ENCODE measurements at regions of chr1 and their contacts with region 1.

Region 1: DNA sequence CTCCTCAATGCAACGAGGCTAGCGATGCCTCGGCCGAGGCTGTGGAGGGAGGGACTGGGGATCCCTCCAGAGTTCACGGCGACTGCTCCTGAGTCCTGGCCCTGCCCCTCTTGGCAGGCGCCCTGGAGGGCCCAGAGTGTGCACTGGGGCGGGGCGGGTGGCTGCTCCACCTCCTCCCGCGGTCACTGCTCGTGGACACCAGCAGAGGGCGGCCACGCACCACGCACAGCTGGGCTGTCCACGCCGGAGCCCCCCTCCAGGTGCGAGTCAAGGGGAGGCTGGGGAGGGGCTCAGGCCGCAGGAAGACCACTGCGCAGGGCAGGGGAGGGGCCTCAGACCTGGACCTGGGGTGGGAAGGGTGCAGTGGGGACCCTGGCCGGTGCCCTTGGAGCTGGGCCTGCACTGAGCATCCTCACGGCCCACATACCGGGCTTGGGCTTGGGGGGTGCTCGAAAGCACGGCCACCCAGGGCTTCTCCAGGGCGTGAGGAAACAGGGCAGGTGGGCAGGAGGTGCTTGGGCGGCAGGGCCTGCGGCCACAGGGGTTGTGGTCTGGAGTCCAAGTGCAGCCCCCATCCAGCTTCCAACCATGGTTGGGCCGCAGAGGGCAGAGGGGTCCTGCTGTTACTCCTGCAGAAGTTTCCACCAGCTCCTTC is 20.6 kb upstream of the TTC34 start:
- DNase-seq: peak; percentile 21 to 73 (median 45)
- ATAC-seq: peak; percentile 88
- H3K4me3 ChIP-seq: no peak overlapping the region
- H3K4me3 Mint-ChIP-seq: no peak overlapping the region
- H3K27ac ChIP-seq: no peak overlapping the region
- H3K27ac Mint-ChIP-seq: no peak overlapping the region
- H3K4me1 ChIP-seq: peaks cover 11% of the 10 kb centered on the region
- H3K4me1 Mint-ChIP-seq: no peaks in the 10 kb centered on the region
- H3K27me3 ChIP-seq: peaks cover 6 to 11% of the 10 kb centered on the region in 2 experiments
- H3K27me3 Mint-ChIP-seq: peaks cover 4% of the 10 kb centered on the region
- CTCF ChIP-seq: peak; percentile 76

Region 2: DNA sequence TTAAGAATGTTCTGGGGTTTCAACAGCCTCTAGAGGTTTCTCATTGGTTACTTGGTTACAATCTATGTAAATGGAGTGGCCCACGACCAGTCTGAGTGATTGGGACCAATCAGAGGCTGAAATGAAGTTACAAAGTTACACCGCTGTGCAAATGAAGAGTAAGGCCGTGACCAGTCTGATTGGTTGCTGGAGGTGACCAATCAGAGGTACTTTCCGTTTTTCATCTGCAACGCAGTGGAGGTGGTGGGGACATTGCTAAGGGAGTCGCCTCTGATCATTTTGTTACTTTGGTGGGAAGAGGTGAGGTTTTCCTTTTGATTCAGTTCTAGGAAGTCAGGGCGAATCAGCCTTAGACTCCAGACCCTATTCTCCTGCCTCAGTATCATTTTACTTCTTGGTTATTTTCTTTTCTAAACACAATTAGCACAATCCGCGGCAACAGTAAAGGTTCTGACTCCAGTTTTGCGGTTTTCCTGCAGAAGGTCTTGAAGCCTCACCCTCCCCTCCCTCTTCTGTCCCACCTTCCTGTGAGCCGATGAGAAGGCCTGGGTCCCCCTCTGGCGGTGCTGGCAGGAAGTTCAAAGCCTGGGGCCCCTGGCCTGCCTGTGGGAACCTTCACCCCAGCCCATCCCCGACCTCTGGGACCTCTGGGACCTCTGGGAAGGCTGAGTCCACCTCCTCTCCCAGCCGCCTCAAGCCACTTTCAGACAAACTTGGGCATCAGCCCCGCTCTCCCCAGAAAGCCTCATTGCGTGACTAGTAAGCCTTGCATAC is 18.1 kb after region 1 on chr1:
- CTCF ChIA-PET with region 1: no interaction called
- POLR2A ChIA-PET with region 1: no interaction called
- intact Hi-C with region 1: loop called (anchors 1 kb)
- DNase-seq: peak; percentile 52 to 86 (median 68)
- ATAC-seq: peak; percentile 89
- H3K4me3 ChIP-seq: peak overlapping the region; percentile 35
- H3K4me3 Mint-ChIP-seq: peak overlapping the region; percentile 83
- H3K27ac ChIP-seq: peak overlapping the region; percentile 11 to 55
- H3K27ac Mint-ChIP-seq: peak overlapping the region; percentile 85
- H3K4me1 ChIP-seq: peaks cover 17% of the 10 kb centered on the region
- H3K4me1 Mint-ChIP-seq: peaks cover 23% of the 10 kb centered on the region
- H3K27me3 ChIP-seq: no peaks in the 10 kb centered on the region
- H3K27me3 Mint-ChIP-seq: no peaks in the 10 kb centered on the region
- CTCF ChIP-seq: peak; percentile 84

Region 3: DNA sequence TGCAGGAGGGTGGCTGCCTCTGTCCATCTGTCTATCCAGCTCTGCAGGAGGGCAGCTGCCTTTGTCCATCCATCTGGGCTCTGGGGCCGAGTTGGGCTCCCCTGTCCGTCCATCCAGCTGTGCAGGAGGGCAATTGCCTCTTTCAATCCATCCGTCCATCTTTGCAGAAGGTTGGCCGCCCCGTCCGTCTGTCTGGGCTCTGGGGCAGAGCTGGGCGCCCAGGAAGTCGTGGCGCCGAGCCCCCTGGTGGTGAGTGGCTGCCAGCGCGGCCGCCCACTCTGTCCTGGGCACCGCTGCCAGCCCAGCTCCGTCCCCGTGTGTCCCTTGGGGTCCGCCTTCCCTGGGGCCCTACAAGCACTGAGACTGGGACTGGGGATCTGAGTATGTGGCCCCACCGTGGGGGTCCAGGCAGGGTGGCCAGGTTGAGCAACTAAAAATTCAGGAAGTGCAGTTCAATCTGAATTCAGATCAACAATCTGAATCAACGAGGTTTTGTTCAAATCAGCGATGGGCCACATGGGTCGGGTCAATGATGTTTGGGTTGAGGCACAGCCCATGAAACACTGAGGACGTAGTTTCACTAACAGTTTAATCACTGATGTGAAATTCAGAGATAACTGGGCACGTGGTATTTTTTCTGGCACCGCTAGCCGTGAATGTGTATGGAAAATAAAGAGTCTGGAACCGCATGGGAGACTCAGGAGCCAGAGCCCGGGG is 100.0 kb after region 1 on chr1:
- CTCF ChIA-PET with region 1: interaction called, 5 read pairs
- POLR2A ChIA-PET with region 1: no interaction called
- intact Hi-C with region 1: loop called (anchors 1 to 5 kb)
- DNase-seq: peak in 12 of 14 experiments; percentile 16 to 67 (median 36)
- ATAC-seq: peak; percentile 54
- H3K4me3 ChIP-seq: no peak overlapping the region
- H3K4me3 Mint-ChIP-seq: no peak overlapping the region
- H3K27ac ChIP-seq: no peak overlapping the region
- H3K27ac Mint-ChIP-seq: no peak overlapping the region
- H3K4me1 ChIP-seq: peaks cover 9% of the 10 kb centered on the region
- H3K4me1 Mint-ChIP-seq: no peaks in the 10 kb centered on the region
- H3K27me3 ChIP-seq: peaks cover 0 to 2% of the 10 kb centered on the region in 2 experiments
- H3K27me3 Mint-ChIP-seq: no peaks in the 10 kb centered on the region
- CTCF ChIP-seq: peak; percentile 69

Measured in CD4-positive, alpha-beta T cell (primary cell).